ENCODE measurements at regions of chr10 and their contacts with region 1.

Region 1: DNA sequence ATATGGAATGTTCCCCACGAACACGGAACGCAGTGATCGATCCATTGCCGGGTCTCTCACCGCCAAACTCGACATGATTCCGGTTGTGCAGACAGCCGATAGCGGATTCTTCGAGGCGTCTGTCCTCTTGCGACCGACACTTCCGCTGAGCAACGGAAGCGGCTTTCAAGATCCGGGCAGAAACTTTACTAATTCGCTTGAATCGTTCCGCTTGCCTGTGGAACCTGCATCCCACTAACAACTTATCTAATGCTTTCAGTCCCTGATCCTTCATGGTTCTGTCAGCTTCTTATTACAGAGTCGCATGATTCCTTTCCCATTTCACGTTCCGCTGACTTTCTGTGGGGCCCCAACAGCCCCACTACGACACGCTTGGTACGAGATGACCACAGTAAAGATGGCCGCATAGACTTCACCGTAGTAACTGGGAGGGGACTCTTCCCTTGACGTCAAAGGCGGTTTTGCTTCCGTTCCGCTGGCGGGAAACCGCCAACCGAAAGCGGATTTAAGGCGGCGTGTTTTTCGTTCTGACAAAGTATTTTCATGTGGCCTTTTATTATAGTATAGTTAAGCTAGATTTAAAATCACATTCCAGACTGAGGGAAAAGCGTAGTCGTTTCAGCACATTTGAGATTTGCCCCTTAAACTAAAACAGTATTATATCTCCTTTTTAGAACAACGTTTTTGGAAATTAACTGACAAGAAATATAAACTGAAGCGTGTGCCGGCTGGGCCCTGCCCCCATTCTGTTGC is at the start of gene CSTF2T:
- DNase-seq: peak; percentile 85 to 86
- ATAC-seq: peak; percentile 96 to 98
- H3K4me3 ChIP-seq: peak within 1 kb of the TSS; percentile 64 to 94 (median 77)
- H3K27ac ChIP-seq: peak within 1 kb of the TSS; percentile 92 to 94 (median 93)
- H3K4me1 ChIP-seq: peaks cover 41 to 44% of the 10 kb centered on the region in 2 donors
- H3K27me3 ChIP-seq: no peaks in the 10 kb centered on the region
- CTCF ChIP-seq: no peak
- POLR2A ChIP-seq: peak; percentile 43 to 50
- total RNA-seq, gene CSTF2T: 11.4 to 22.2 (median 16.3) TPM

Region 2: GRCh38 chr10:50988792-50989191 is 710.9 kb before region 1 on chr10:
- in situ Hi-C with region 1: no loop called
- intact Hi-C with region 1: loop called (anchors 5 kb)
- DNase-seq: no peak
- ATAC-seq: no peak
- H3K4me3 ChIP-seq: peak overlapping the region in 3 of 4 donors; percentile 20 to 77 (median 36)
- H3K27ac ChIP-seq: peak overlapping the region; percentile 96 to 99 (median 98)
- H3K4me1 ChIP-seq: peaks cover 11 to 17% of the 10 kb centered on the region in 2 donors
- H3K27me3 ChIP-seq: no peaks in the 10 kb centered on the region
- CTCF ChIP-seq: peak in 4 of 5 experiments; percentile 16 to 62 (median 52)
- POLR2A ChIP-seq: no peak

Region 3: DNA sequence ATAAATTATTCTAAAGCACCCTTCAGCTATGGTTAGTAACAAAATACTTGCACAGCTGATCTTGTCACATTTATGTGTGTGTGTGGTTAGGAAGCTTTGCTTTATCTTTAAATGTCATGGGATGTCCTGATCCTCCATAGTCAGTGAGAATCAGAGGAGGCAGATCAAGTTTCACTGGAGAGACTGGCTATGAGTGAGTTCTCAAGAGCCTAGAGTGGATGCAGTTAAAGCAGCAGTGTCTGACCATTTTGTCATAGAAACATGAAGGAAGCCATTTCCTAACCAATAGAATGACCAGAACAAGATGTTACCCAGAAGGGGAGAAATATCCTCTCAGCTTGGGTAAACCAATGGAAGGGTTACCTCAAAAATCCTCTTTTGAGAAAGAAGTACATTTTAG is 407.2 kb after region 1 on chr10:
- in situ Hi-C with region 1: no loop called
- intact Hi-C with region 1: loop called (anchors 5 kb)
- DNase-seq: peak in 1 of 2 donors; percentile 17
- ATAC-seq: peak; percentile 42 to 43
- H3K4me3 ChIP-seq: no peak overlapping the region
- H3K27ac ChIP-seq: peak overlapping the region; percentile 76 to 87 (median 78)
- H3K4me1 ChIP-seq: peaks cover 35 to 44% of the 10 kb centered on the region in 2 donors
- H3K27me3 ChIP-seq: no peaks in the 10 kb centered on the region
- CTCF ChIP-seq: no peak
- POLR2A ChIP-seq: no peak

Region 4: GRCh38 chr10:52128056-52128683 is 428.5 kb after region 1 on chr10:
- in situ Hi-C with region 1: no loop called
- intact Hi-C with region 1: no loop called
- DNase-seq: peak; percentile 78 to 88
- ATAC-seq: peak; percentile 97 to 98
- H3K4me3 ChIP-seq: peak overlapping the region; percentile 49 to 51 (median 49)
- H3K27ac ChIP-seq: peak overlapping the region; percentile 81 to 82 (median 82)
- H3K4me1 ChIP-seq: peaks cover 5 to 7% of the 10 kb centered on the region in 2 donors
- H3K27me3 ChIP-seq: no peaks in the 10 kb centered on the region
- CTCF ChIP-seq: no peak
- POLR2A ChIP-seq: peak; percentile 58 to 78